Motor neuron (in vitro differentiated cells): ENCODE measurements at regions of chr9 and their contacts with region 1.

Region 1: GRCh38 chr9:90914868-90915483 is 113.4 kb downstream of the SYK start:
- ATAC-seq: peak; percentile 95 to 99 (median 98)
- H3K4me3 ChIP-seq: no peak overlapping the region
- H3K27ac ChIP-seq: no peak overlapping the region
- H3K4me1 ChIP-seq: no peaks in the 10 kb centered on the region

Region 2: GRCh38 chr9:90420768-90421513 is 494.0 kb before region 1 on chr9:
- in situ Hi-C with region 1: no loop called
- ATAC-seq: no peak
- H3K4me3 ChIP-seq: no peak overlapping the region
- H3K27ac ChIP-seq: no peak overlapping the region
- H3K4me1 ChIP-seq: peaks cover 2 to 8% of the 10 kb centered on the region in 2 donors

Region 3: DNA sequence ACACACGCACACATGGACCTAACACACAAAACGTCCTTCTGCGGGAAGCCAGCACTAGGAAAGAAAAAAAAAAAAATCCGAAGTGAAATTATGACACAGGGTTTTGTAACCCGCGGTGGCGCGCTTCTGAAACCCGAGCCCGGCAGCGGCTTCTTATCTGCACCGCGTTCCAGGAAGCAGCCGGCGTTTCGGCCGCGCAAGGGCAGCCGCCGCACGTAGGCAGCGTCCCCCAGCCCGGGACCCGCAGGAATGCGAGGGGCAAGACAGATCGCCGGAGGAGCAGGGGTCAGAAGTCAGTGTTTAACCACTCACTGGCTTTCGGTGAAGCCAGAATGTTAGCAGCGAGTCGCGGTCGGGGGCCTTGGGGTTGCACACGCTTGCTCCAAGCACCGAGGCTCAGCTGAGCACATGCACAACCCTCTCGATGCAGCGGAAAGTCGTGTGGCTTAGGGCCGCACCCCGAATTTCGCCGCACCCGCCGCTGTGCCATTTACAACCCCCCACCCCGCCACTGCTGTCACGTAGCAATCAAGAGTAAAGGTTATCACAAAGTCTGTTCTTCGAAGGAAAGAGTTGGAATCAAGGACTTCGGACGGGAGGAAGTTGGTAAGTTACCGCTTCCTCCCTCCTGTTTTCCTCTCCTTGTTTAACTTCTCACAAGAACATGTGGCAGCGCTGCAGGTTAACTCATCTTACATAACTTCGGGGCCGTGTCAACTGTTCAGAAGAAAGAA is 278.8 kb after region 1 on chr9:
- in situ Hi-C with region 1: loop called in 1 of 9 experiments (anchors 25 kb)
- ATAC-seq: peak; percentile 12 to 50 (median 30)
- H3K4me3 ChIP-seq: peak overlapping the region; percentile 15 to 33 (median 18)
- H3K27ac ChIP-seq: peak overlapping the region; percentile 54 to 71
- H3K4me1 ChIP-seq: peaks cover 33 to 44% of the 10 kb centered on the region in 2 donors

Region 4: DNA sequence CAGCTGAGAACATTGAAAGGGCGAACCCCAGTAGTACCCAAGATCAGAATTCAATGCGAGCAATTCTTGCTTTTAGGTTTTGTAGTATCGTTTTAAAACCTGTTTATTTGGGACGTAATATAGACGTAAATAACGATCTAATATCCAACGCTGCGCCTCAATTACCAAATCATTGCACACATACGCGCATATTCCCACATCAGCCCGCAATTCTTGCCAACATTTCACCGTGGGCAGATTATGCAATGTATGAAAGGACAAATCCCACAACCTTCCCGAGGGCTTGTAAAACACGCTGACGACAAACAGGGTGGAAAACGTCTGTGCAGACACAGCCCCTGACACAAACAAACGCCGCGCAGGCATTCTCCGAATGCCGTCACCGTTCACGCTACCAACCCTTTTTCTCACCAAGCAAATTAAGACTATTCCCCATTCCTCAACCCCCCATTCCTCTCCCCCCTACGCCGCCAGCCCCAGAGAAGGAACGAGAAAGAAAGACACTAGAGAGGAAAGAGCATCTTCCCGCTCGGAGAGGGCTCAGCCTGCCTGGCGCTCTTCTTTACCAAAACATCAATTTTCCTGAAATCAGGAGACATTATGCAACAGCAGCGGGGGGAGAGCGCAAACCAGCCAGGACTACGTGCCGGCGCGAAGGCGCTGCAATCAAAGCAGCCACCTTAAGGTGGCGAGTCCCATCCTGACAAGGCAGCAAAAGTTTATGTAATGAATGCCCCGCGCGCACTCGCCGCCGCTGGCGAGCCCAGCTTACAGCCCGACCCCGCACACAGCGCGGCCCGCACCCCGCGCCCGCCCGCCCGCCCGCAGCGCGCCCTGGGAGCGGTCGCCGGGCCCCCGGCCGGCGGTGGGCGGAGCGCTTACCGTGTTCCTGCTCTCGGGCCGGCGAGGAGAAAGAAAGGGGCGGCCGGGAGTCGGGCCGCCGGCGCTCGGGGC is 508.1 kb after region 1 on chr9:
- in situ Hi-C with region 1: loop called in 2 of 9 experiments (anchors 25 kb)
- ATAC-seq: peak; percentile 2 to 34 (median 24)
- H3K4me3 ChIP-seq: peak overlapping the region; percentile 59 to 92 (median 89)
- H3K27ac ChIP-seq: peak overlapping the region; percentile 92 to 97
- H3K4me1 ChIP-seq: peaks cover 12 to 25% of the 10 kb centered on the region in 2 donors

Region 5: GRCh38 chr9:91681461-91682305 is 766.7 kb after region 1 on chr9:
- in situ Hi-C with region 1: loop called in 3 of 9 experiments (anchors 25 kb)
- ATAC-seq: peak; percentile 79 to 99 (median 96)
- H3K4me3 ChIP-seq: peak overlapping the region in 1 of 5 donors; percentile 8
- H3K27ac ChIP-seq: no peak overlapping the region
- H3K4me1 ChIP-seq: peaks cover 5 to 7% of the 10 kb centered on the region in 2 donors

Region 6: GRCh38 chr9:91727316-91727861 is 812.4 kb after region 1 on chr9:
- in situ Hi-C with region 1: loop called in 2 of 9 experiments (anchors 25 kb)
- ATAC-seq: peak; percentile 87 to 95 (median 90)
- H3K4me3 ChIP-seq: no peak overlapping the region
- H3K27ac ChIP-seq: no peak overlapping the region
- H3K4me1 ChIP-seq: no peaks in the 10 kb centered on the region